CD14-positive monocyte (primary cell): ENCODE measurements at regions of chr19 and their contacts with region 1.

Region 1: GRCh38 chr19:11293433-11294389 is 2.2 kb upstream of the TSPAN16 start:
- DNase-seq: peak; percentile 96 to 98 (median 98)
- H3K4me3 ChIP-seq: peak overlapping the region in 2 of 3 experiments; percentile 19 to 69
- H3K4me3 Mint-ChIP-seq: peak overlapping the region; percentile 67 to 82
- H3K27ac ChIP-seq: peak overlapping the region; percentile 58 to 78
- H3K27ac Mint-ChIP-seq: peak overlapping the region; percentile 84 to 95 (median 93)
- H3K4me1 ChIP-seq: peaks cover 75 to 78% of the 10 kb centered on the region in 2 donors
- H3K4me1 Mint-ChIP-seq: peaks cover 72% of the 10 kb centered on the region
- H3K27me3 ChIP-seq: no peaks in the 10 kb centered on the region
- H3K27me3 Mint-ChIP-seq: peaks cover 0 to 5% (median 4%) of the 10 kb centered on the region in 3 donors
- CTCF ChIP-seq: peak; percentile 98

Region 2: DNA sequence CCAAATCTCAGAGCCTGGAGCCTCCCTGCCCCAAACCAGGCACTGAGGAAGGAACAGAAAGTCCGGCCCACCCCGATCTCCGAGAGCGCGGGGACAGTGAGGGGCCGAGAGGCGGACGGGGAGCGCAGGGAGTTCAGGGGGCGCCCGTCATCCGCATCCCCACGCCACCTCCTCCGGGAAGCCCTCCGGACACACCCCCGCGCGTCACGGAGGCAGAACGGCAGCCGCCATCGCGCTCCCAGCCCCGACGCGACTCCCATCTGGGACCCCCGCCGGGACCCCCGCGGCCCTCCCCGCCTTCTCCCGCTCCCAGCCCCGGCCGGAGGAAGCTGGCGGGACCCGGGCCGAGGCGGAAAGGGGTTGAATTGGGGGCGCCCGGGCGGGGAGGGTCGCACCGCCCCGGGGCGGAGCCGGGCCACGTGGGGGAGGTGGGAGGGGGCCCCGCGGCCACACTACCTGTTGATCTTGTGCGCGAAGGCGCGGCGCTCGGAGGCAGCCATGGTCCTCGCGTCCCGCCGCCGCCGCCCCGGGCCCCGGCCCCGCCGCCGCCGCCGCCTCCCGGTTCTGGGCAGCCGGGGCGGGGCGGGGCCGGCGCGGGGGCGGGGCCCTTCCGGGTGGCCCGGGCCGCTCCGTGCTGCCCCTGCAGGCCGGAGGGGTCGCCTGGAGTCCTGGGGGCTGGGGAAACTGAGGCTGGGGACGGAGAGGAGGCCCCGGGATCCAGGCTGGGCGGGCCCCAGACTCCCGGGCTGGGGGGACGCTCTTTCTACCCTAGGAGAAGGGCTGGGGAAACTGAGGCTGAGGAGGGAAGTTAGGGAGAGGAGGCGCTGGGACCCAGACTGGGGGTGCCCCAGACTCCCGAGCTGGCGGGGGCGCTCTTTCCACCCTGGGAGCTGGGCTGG is 31.5 kb before region 1 on chr19 and contains the start of gene DOCK6:
- intact Hi-C with region 1: no loop called
- DNase-seq: no peak
- H3K4me3 ChIP-seq: peak within 1 kb of the TSS; percentile 35 to 74 (median 37)
- H3K4me3 Mint-ChIP-seq: peak within 1 kb of the TSS; percentile 78 to 87
- H3K27ac ChIP-seq: no peak within 1 kb of the TSS
- H3K27ac Mint-ChIP-seq: peak within 1 kb of the TSS in 2 of 7 donors; percentile 18 to 41
- H3K4me1 ChIP-seq: peaks cover 7 to 10% of the 10 kb centered on the region in 2 donors
- H3K4me1 Mint-ChIP-seq: peaks cover 2% of the 10 kb centered on the region
- H3K27me3 ChIP-seq: peaks cover 24 to 52% of the 10 kb centered on the region in 2 donors
- H3K27me3 Mint-ChIP-seq: peaks cover 52 to 78% (median 70%) of the 10 kb centered on the region in 3 donors
- CTCF ChIP-seq: peak; percentile 22
- polyA plus RNA-seq, gene DOCK6: 0.03 to 0.93 (median 0.18) TPM

Region 3: GRCh38 chr19:11324079-11324661 is 30.5 kb after region 1 on chr19:
- intact Hi-C with region 1: loop called in 1 of 2 experiments (anchors 1 kb)
- DNase-seq: peak; percentile 97 to 99 (median 99)
- H3K4me3 ChIP-seq: peak overlapping the region in 2 of 3 experiments; percentile 15 to 77
- H3K4me3 Mint-ChIP-seq: peak overlapping the region; percentile 64 to 83
- H3K27ac ChIP-seq: peak overlapping the region; percentile 94 to 97
- H3K27ac Mint-ChIP-seq: peak overlapping the region; percentile 91 to 99 (median 99)
- H3K4me1 ChIP-seq: peaks cover 72 to 80% of the 10 kb centered on the region in 2 donors
- H3K4me1 Mint-ChIP-seq: peaks cover 77% of the 10 kb centered on the region
- H3K27me3 ChIP-seq: no peaks in the 10 kb centered on the region
- H3K27me3 Mint-ChIP-seq: peaks cover 0 to 4% (median 0%) of the 10 kb centered on the region in 3 donors
- CTCF ChIP-seq: no peak

Region 4: DNA sequence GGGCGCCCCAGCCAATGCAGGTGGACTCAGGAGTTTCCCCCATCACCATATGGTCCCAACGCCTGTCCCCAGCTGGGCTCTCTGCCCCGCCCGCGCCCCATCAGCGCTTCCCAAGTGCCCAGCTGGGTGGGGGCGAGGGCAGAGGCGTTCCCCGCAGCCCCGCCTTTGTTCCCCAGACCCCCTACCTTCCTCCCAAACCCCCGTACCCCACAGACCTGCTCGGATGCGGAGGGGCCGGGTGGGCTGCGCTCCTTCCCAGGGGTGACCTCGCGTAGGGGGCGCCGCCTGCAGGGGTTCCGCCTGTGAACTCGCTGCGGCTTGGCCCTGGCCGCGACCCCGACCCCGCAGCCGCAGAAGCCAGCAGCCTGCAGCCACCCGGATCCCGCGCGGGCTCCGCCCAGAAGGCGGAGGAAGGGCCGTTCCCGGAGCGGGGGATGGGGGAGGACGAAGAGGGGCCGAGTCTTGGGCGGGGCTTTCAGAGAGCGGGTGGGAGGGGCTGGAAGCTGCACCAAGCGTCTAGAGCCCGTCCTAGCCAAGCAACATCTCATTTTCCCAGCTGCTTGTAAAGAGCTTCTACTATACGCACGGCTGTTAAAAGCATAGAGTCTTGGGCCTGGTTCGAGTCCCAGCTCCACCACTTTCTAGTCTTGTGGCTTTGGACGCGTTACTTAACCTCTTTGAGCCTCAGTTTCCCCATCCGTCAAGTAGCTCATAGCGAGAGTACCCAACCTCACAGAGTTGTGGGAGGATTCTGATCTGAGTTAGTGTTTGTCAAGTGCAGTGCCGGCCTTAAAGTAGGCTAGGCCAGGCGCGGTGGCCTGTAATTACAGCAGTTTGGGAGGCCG is 45.8 kb after region 1 on chr19 and contains the start of gene RAB3D:
- intact Hi-C with region 1: loop called (anchors 2 to 5 kb)
- DNase-seq: peak; percentile 74 to 88 (median 80)
- H3K4me3 ChIP-seq: peak within 1 kb of the TSS; percentile 66 to 99 (median 98)
- H3K4me3 Mint-ChIP-seq: peak within 1 kb of the TSS; percentile 91 to 99
- H3K27ac ChIP-seq: peak within 1 kb of the TSS; percentile 54 to 85
- H3K27ac Mint-ChIP-seq: peak within 1 kb of the TSS; percentile 85 to 97 (median 91)
- H3K4me1 ChIP-seq: peaks cover 50 to 64% of the 10 kb centered on the region in 2 donors
- H3K4me1 Mint-ChIP-seq: peaks cover 40% of the 10 kb centered on the region
- H3K27me3 ChIP-seq: no peaks in the 10 kb centered on the region
- H3K27me3 Mint-ChIP-seq: peaks cover 0 to 2% (median 0%) of the 10 kb centered on the region in 3 donors
- CTCF ChIP-seq: no peak
- polyA plus RNA-seq, gene RAB3D: 52.9 to 78.1 (median 60.8) TPM

Region 5: GRCh38 chr19:11380653-11381534 is 87.2 kb after region 1 on chr19:
- intact Hi-C with region 1: loop called in 1 of 2 experiments (anchors 5 kb)
- DNase-seq: peak; percentile 91 to 95 (median 92)
- H3K4me3 ChIP-seq: peak overlapping the region; percentile 68 to 87 (median 72)
- H3K4me3 Mint-ChIP-seq: peak overlapping the region; percentile 92 to 100
- H3K27ac ChIP-seq: peak overlapping the region; percentile 81 to 95
- H3K27ac Mint-ChIP-seq: peak overlapping the region; percentile 97 to 100 (median 99)
- H3K4me1 ChIP-seq: peaks cover 69 to 89% of the 10 kb centered on the region in 2 donors
- H3K4me1 Mint-ChIP-seq: peaks cover 57% of the 10 kb centered on the region
- H3K27me3 ChIP-seq: peaks cover 0 to 19% of the 10 kb centered on the region in 2 donors
- H3K27me3 Mint-ChIP-seq: peaks cover 16 to 28% (median 21%) of the 10 kb centered on the region in 3 donors
- CTCF ChIP-seq: peak; percentile 80

Region 6: DNA sequence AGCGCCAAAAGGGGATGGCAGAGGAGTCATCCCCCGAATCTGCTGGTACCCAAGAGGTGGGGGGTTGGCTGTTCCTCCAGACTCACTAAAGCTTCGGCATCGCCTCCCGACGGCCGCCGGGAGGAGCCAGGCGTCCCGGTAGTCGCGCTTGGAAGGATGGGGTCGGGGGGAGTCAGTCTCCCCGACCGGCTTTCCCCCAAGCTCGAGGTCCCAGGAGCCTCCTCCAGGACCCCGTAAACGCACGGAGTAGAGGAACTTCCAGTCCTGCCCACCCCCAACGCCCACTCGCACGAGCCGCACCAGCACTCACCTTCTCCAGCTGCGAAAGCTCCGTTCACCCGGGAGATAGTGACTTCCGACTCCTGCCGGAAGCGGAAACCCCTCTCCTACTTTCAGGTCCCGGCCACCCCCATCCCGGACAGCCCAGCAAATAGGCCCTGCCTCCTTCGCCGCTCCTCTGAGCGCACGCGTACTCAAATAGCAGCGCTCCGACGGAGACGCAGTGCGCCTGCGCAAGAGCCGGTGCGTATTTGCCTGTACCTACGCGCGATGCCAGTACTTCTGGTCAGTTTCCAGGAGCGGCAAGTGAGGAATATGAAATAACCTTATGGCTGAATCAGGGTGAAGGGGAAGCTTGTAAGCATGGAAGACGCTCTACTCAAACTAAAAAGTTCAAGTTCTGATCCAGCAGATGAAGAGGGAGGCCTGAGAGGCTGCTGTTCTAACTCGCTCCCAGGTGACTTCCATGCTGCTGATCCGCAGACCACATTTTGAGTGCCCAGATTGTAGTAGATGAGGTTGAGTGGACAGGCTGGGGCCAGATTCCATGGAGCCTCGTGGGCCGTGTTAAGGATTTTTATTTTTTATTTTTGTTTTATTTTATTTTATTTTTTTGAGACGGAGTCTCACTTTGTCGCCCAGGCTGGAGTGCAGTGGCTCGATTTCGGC is 265.4 kb after region 1 on chr19 and contains the start of gene ELOF1:
- intact Hi-C with region 1: loop called in 1 of 2 experiments (anchors 10 kb)
- DNase-seq: peak; percentile 98 to 99 (median 98)
- H3K4me3 ChIP-seq: peak within 1 kb of the TSS; percentile 63 to 97 (median 86)
- H3K4me3 Mint-ChIP-seq: peak within 1 kb of the TSS; percentile 95 to 96
- H3K27ac ChIP-seq: peak within 1 kb of the TSS; percentile 59 to 74
- H3K27ac Mint-ChIP-seq: peak within 1 kb of the TSS; percentile 77 to 97 (median 94)
- H3K4me1 ChIP-seq: peaks cover 33 to 52% of the 10 kb centered on the region in 2 donors
- H3K4me1 Mint-ChIP-seq: peaks cover 60% of the 10 kb centered on the region
- H3K27me3 ChIP-seq: no peaks in the 10 kb centered on the region
- H3K27me3 Mint-ChIP-seq: peaks cover 0 to 1% (median 0%) of the 10 kb centered on the region in 3 donors
- CTCF ChIP-seq: no peak
- polyA plus RNA-seq, gene ELOF1: 48.5 to 95.5 (median 77.5) TPM